Activated B cell treated with CpG ODN at 0.5 μM for 24 hours (primary cell): ENCODE measurements at regions of chr1 and their contacts with region 1.

Region 1: DNA sequence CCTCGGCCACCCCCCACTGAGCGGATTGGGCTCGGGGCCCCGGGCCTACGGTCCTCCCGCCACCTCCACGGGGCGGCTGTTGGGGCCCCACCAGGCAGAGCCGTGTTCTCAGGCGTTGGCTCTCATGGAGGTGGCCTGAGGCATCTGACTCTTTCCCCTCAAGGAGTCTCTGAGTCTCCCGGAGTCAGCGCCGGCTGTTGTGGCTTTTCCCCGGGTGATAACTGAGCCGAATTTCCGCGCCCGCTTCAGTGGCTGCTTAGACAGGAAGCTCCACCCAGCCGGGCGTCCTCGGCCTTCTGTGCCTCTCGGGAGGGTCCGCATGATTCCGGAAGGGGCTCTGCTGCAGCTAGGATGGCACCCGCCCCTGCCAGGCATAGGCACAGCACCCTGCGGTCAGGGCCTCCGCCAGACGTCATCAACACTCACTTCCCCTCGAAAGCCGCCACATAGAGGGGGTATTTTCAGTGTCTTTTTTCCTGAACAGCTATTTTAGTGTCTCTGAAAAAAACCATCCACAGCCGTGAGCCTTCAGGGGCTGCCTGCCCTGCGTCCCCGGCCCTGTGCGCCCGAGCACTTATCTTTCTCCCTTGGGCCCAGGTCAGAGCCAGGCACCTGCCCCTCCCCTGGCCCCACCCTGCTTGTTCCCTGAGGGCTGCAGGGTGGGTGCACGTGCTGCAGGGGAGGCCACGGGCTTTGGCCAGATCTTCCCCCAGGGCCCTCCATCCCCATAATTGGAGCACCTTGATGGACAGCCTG is 72.9 kb downstream of the SKI start:
- DNase-seq: peak; percentile 86
- ATAC-seq: peak; percentile 82
- H3K4me3 Mint-ChIP-seq: peak overlapping the region; percentile 85
- H3K27ac Mint-ChIP-seq: peak overlapping the region; percentile 97
- H3K4me1 Mint-ChIP-seq: peaks cover 65% of the 10 kb centered on the region
- H3K27me3 Mint-ChIP-seq: no peaks in the 10 kb centered on the region
- CTCF ChIP-seq: no peak

Region 2: GRCh38 chr1:2115681-2116341 is 185.2 kb before region 1 on chr1:
- CTCF ChIA-PET with region 1: no interaction called
- POLR2A ChIA-PET with region 1: no interaction called
- intact Hi-C with region 1: no loop called
- DNase-seq: no peak
- ATAC-seq: no peak
- H3K4me3 Mint-ChIP-seq: no peak overlapping the region
- H3K27ac Mint-ChIP-seq: no peak overlapping the region
- H3K4me1 Mint-ChIP-seq: peaks cover 43% of the 10 kb centered on the region
- H3K27me3 Mint-ChIP-seq: no peaks in the 10 kb centered on the region
- CTCF ChIP-seq: no peak

Region 3: GRCh38 chr1:2133039-2133878 is 167.8 kb before region 1 on chr1:
- CTCF ChIA-PET with region 1: no interaction called
- POLR2A ChIA-PET with region 1: no interaction called
- intact Hi-C with region 1: loop called (anchors 1 kb)
- DNase-seq: peak; percentile 97
- ATAC-seq: peak; percentile 90
- H3K4me3 Mint-ChIP-seq: peak overlapping the region; percentile 80
- H3K27ac Mint-ChIP-seq: peak overlapping the region; percentile 75
- H3K4me1 Mint-ChIP-seq: peaks cover 14% of the 10 kb centered on the region
- H3K27me3 Mint-ChIP-seq: no peaks in the 10 kb centered on the region
- CTCF ChIP-seq: no peak

Region 4: DNA sequence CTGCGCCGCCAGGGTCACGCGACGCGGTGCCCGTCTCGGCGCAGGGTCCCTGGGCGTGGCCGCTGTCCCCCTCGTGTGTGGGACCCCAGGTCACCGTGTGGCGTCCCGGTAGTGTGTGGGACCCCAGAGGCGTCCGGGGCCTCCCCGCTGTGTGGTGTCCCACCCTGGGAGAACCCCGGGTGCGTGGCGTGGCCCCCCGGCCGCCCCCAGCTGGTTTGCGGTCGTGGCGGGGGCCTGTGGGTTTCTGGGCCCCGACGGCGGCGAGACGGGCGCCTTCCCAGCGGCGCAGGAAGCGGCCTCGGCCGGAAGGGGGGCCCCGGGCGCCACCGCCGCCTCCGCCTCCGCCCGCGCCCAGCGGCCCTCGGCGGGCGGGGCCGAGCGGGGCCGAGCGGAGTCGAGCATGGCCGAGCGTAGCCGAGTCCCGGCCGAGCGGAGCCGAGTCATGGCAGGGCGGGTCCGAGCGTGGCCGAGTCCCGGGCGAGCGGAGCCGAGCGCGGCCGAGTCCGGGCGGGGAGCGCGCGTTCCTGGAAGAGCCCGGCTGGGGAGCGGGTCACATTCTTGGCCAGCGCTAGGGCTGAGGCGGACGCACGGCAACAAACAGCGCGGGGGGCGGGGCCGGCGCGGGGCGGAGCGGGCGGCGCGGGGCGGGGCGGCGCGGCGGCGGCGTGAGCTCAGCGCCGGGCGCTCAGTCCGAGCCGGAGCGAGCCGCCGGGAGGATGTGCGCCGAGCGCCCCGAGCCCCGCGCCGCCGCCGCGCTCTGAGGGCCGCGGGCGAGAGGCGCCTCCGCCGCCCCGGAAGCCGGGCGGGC is 73.5 kb before region 1 on chr1:
- CTCF ChIA-PET with region 1: interaction called, 6 read pairs
- POLR2A ChIA-PET with region 1: interaction called, 46 read pairs
- intact Hi-C with region 1: loop called (anchors 1 kb)
- DNase-seq: peak; percentile 98
- ATAC-seq: peak; percentile 93
- H3K4me3 Mint-ChIP-seq: peak overlapping the region; percentile 76
- H3K27ac Mint-ChIP-seq: peak overlapping the region; percentile 56
- H3K4me1 Mint-ChIP-seq: peaks cover 37% of the 10 kb centered on the region
- H3K27me3 Mint-ChIP-seq: no peaks in the 10 kb centered on the region
- CTCF ChIP-seq: no peak

Region 5: DNA sequence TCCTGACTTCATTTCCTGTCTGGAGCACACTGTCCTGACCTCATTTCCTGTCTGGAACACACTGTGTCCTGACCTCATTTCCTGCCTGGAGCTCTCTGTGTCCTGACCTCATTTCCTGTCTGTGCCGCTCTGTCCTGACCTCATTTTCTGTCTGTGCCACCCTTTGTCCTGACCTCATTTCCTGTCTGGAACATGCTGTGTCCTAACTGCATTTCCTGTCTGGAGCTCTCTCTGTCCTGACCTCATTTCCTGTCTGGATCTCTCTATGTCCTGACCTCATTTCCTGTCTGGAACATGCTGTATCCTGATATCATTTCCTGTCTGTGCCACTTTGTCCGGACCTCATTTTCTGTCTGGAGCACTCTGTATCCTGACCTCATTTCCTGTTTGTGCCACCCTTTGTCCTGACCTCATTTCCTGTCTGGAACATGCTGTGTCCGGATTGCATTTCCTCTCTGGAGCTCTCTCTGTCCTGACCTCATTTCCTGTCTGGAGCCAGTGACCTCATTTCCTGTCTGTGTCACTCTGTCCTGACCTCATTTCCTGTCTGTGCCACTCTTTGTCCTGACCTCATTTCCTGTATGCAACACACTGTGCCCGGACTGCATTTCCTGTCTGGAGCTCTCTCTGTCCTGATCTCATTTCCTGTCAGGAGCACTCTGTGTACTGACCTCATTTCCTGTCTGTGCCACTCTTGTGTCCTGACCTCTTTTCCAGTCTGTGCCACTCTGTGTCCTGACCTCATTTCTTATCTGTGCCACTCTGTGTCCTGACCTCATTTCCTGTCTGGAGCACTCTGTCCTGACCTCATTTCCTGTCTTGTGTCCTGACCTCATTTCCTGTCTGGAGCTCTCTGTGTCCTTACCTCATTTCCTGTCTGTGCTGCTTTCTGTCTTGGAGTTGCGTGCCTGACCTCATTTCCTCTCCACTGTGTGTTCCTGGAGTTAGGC is 45.3 kb before region 1 on chr1:
- CTCF ChIA-PET with region 1: no interaction called
- POLR2A ChIA-PET with region 1: interaction called, 31 read pairs
- intact Hi-C with region 1: loop called (anchors 1 kb)
- DNase-seq: peak; percentile 45
- ATAC-seq: peak; percentile 58
- H3K4me3 Mint-ChIP-seq: no peak overlapping the region
- H3K27ac Mint-ChIP-seq: no peak overlapping the region
- H3K4me1 Mint-ChIP-seq: peaks cover 60% of the 10 kb centered on the region
- H3K27me3 Mint-ChIP-seq: no peaks in the 10 kb centered on the region
- CTCF ChIP-seq: no peak

Region 6: DNA sequence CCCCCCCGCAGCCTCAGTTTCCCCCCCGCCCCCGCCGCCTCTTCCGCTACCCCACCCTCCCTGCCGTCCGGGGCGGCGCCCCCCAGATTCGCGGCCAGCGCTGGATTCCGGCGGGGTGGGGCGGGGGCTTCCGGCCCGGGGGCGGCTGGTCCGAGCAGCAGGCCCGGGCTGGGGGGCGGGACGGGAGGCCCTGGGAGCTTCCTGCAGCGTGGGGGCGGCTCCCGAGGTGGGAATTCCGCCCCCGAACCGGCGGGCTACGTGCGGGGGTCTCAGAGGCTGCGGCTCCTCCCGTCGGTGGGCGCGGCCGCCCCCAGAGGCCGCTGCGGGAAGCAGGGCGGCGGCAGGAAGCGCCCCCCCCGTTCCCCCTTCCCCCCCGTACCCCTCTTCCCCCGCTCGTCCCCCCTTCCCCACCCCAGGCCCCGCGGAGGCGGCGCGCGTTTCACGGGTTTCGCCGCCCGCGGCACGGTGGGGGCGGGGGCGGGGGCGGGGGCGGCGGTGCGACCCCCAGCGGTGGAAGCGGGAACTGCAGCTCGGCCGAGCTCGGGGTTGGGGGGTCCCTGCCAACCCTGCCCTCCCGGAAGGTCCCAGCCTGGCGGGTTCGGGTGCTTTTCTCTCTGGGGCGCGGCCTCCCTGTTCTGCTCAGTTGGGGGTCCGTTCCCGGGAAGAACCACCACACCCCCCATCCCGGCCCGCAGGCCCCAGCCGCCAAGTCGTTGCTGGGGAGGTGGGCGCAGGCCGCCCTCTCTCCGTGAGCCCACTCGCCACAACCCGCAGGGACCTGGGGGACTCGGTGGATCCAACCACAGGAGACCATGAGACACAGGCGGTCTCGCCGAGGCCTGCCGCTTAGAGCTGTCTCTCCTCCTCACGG is 14.0 kb after region 1 on chr1:
- CTCF ChIA-PET with region 1: interaction called, 18 read pairs
- POLR2A ChIA-PET with region 1: interaction called, 100 read pairs
- intact Hi-C with region 1: loop called (anchors 1 kb)
- DNase-seq: peak; percentile 78
- ATAC-seq: peak; percentile 58
- H3K4me3 Mint-ChIP-seq: peak overlapping the region; percentile 66
- H3K27ac Mint-ChIP-seq: peak overlapping the region; percentile 18
- H3K4me1 Mint-ChIP-seq: peaks cover 37% of the 10 kb centered on the region
- H3K27me3 Mint-ChIP-seq: no peaks in the 10 kb centered on the region
- CTCF ChIP-seq: peak; percentile 83

Region 7: GRCh38 chr1:2412519-2413233 is 111.6 kb after region 1 on chr1 and contains the start of gene PEX10:
- CTCF ChIA-PET with region 1: no interaction called
- POLR2A ChIA-PET with region 1: no interaction called
- intact Hi-C with region 1: loop called (anchors 1 kb)
- DNase-seq: peak; percentile 100
- ATAC-seq: peak; percentile 93
- H3K4me3 Mint-ChIP-seq: peak within 1 kb of the TSS; percentile 83
- H3K27ac Mint-ChIP-seq: peak within 1 kb of the TSS; percentile 71
- H3K4me1 Mint-ChIP-seq: peaks cover 45% of the 10 kb centered on the region
- H3K27me3 Mint-ChIP-seq: no peaks in the 10 kb centered on the region
- CTCF ChIP-seq: no peak
- total RNA-seq, gene PEX10: 17.4 and 18.9 TPM in 2 replicates